ENCODE measurements at regions of chr1 and their contacts with region 1.

Region 1: DNA sequence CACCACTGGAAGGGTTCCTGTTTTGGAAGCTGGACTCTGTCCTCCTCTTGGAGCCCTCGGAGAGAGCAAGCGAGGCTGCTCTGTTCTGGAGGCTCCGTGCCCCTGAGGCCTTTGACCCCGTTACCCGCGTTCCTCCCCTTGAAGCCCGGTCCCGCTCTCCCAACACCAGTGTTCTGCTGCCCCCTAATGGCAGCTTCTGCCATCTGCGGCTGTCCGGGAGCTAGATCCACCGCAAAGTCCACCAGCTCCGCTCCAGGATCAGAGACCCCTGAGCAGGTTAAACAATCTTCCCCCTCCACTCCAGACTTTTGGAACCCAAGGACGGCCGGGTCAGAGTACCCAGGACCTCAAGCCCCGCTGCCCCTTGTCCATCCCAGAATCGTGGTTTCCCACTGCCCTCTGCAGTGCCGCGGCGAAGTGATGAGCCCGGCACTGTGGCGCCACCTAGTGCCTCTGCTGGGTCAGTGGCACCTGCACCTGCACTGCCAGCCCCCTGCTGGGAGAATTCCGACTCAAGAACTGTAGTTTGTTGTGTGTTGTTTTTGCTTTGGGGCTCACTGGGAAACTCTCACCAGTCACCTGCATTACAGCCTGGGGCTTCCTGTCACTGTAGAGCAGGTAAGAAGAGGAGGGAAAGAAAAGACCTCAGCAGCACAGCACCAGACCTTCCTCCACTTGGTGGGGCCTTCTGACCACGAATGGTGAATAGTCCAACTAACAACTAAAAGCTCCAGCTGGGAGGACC is 63.5 kb upstream of the NFASC start:
- DNase-seq: peak; percentile 66 to 83
- H3K4me3 ChIP-seq: peak overlapping the region; percentile 56
- H3K27ac ChIP-seq: no peak overlapping the region
- H3K4me1 ChIP-seq: peaks cover 4% of the 10 kb centered on the region; the same call in 1 of the 2 replicates
- H3K27me3 ChIP-seq: peaks cover 14% of the 10 kb centered on the region; the same call in 1 of the 2 replicates
- CTCF ChIP-seq: peak; percentile 99

Region 2: GRCh38 chr1:204213668-204214662 is 593.1 kb before region 1 on chr1 and contains the start of gene GOLT1A:
- CTCF ChIA-PET with region 1: no interaction called
- POLR2A ChIA-PET with region 1: no interaction called
- intact Hi-C with region 1: loop called (anchors 1 kb)
- DNase-seq: peak; percentile 91 to 93
- H3K4me3 ChIP-seq: peak within 1 kb of the TSS; percentile 58
- H3K27ac ChIP-seq: no peak within 1 kb of the TSS
- H3K4me1 ChIP-seq: peaks cover 17% of the 10 kb centered on the region
- H3K27me3 ChIP-seq: no peaks in the 10 kb centered on the region
- CTCF ChIP-seq: peak; percentile 82
- total RNA-seq, gene GOLT1A: 18.7 and 22.8 TPM in 2 replicates

Region 3: DNA sequence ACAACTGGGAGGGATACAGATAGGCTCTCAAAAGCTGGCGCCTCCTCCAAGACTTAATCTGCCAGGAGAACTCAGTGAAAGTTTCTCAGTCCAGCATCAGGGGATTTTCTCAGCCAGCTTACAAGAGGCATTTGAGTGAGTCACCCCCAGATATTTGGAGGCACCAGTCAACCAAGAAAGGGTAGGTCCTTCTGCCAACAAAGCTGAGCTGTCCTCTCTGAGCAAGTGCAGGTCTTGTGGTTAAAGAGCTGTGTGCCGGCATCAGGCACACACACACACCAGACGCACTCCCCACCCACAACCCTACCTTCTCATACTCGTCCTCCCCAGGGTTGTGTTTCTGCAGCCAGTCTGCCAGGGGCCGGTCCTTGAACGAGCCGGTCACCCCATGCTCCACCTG is 368.5 kb before region 1 on chr1:
- CTCF ChIA-PET with region 1: interaction called, 3 read pairs
- POLR2A ChIA-PET with region 1: no interaction called
- intact Hi-C with region 1: loop called (anchors 5 kb)
- DNase-seq: peak; percentile 77 to 99
- H3K4me3 ChIP-seq: peak overlapping the region; percentile 13; the same call in 1 of the 2 replicates
- H3K27ac ChIP-seq: peak overlapping the region; percentile 89
- H3K4me1 ChIP-seq: peaks cover 90% of the 10 kb centered on the region
- H3K27me3 ChIP-seq: no peaks in the 10 kb centered on the region
- CTCF ChIP-seq: no peak

Region 4: DNA sequence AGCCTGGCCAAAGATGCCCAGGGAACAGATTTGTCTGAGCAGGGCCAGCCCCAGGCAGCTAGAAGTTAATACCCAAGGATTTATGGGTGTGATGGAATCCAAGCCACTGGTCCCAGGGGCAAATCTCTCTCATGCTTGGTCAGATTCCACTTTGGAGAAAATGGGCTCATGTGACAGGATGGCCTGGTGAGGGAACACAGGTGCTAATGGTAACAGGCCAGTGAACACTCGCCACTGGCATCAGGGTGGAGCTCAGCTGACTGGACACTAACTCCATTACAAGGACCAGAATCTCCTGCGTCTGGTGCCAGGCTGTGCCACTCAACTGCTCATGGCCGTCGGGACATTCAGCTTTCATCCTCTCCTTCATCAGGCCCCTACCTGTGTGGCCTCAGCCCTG is 278.9 kb before region 1 on chr1:
- CTCF ChIA-PET with region 1: interaction called, 10 read pairs
- POLR2A ChIA-PET with region 1: no interaction called
- intact Hi-C with region 1: no loop called
- DNase-seq: no peak
- H3K4me3 ChIP-seq: no peak overlapping the region
- H3K27ac ChIP-seq: no peak overlapping the region
- H3K4me1 ChIP-seq: no peaks in the 10 kb centered on the region
- H3K27me3 ChIP-seq: no peaks in the 10 kb centered on the region
- CTCF ChIP-seq: no peak

Region 5: GRCh38 chr1:204885288-204885711 is 78.2 kb after region 1 on chr1:
- CTCF ChIA-PET with region 1: no interaction called
- POLR2A ChIA-PET with region 1: no interaction called
- intact Hi-C with region 1: no loop called
- DNase-seq: no peak
- H3K4me3 ChIP-seq: no peak overlapping the region
- H3K27ac ChIP-seq: no peak overlapping the region
- H3K4me1 ChIP-seq: no peaks in the 10 kb centered on the region
- H3K27me3 ChIP-seq: peaks cover 70% of the 10 kb centered on the region
- CTCF ChIP-seq: no peak

Region 6: DNA sequence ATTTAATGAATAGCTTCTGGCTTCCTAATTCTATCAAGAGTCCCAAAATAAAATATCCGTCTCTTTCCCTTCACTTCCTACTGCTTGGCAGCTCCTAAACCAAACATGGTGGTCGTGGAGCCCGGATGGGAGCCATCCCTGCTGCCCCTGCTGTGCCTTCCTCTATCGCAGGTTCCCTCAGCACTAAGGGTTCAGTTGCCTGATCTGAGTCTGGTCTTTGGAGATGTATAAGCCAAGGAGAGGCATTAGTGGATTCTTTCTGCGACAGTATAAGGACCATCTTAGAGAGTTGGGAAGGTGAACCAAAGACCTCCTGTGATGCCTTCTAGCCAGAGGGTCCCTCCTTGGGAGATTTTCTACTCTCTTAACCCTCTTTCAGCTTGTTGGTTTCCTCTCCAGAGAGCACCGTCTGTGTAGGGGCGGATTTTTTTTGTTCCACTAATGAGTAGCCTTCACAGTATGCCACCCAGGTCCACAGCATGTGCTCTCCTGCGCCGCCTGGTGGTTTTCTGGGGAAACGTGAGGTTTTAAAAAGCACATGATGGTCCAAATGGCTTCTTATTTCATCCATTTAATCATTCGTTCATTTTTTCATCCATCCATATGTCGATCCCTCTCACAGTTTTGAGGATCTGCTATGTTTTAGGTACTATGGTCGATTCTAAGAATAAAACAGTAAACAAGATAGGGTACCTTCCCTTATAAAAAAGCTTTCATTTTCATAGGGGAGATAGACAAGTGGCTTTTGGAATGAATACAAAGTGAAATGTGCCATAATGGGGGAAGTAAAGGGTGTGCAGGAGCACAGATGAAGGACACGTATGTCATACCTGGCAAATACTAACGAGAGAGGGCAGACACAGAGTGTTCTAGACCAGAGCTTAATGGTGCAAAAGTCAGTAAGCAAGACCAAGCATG is 134.6 kb after region 1 on chr1:
- CTCF ChIA-PET with region 1: no interaction called
- POLR2A ChIA-PET with region 1: no interaction called
- intact Hi-C with region 1: loop called (anchors 1 kb)
- DNase-seq: peak in 1 of 2 experiments; percentile 30
- H3K4me3 ChIP-seq: no peak overlapping the region
- H3K27ac ChIP-seq: no peak overlapping the region
- H3K4me1 ChIP-seq: no peaks in the 10 kb centered on the region
- H3K27me3 ChIP-seq: peaks cover 91% of the 10 kb centered on the region
- CTCF ChIP-seq: peak; percentile 84